ENCODE measurements at regions of chr13 and their contacts with region 1.

Region 1: GRCh38 chr13:28658796-28659620 is at the start of gene POMP:
- DNase-seq: peak; percentile 96
- H3K4me3 Mint-ChIP-seq: peak within 1 kb of the TSS; percentile 94
- H3K27ac Mint-ChIP-seq: peak within 1 kb of the TSS; percentile 98
- H3K4me1 Mint-ChIP-seq: peaks cover 51% of the 10 kb centered on the region
- H3K27me3 Mint-ChIP-seq: no peaks in the 10 kb centered on the region
- total RNA-seq, gene POMP: 123 to 125 TPM

Region 2: GRCh38 chr13:27620377-27621115 is 1038.5 kb before region 1 on chr13 and contains the start of gene LNX2:
- CTCF ChIA-PET with region 1: no interaction called
- POLR2A ChIA-PET with region 1: no interaction called
- intact Hi-C with region 1: loop called (anchors 10 kb)
- DNase-seq: peak; percentile 98
- H3K4me3 Mint-ChIP-seq: peak within 1 kb of the TSS; percentile 92
- H3K27ac Mint-ChIP-seq: peak within 1 kb of the TSS; percentile 88
- H3K4me1 Mint-ChIP-seq: peaks cover 54% of the 10 kb centered on the region
- H3K27me3 Mint-ChIP-seq: no peaks in the 10 kb centered on the region
- total RNA-seq, gene LNX2: 5.0 to 5.4 TPM

Region 3: DNA sequence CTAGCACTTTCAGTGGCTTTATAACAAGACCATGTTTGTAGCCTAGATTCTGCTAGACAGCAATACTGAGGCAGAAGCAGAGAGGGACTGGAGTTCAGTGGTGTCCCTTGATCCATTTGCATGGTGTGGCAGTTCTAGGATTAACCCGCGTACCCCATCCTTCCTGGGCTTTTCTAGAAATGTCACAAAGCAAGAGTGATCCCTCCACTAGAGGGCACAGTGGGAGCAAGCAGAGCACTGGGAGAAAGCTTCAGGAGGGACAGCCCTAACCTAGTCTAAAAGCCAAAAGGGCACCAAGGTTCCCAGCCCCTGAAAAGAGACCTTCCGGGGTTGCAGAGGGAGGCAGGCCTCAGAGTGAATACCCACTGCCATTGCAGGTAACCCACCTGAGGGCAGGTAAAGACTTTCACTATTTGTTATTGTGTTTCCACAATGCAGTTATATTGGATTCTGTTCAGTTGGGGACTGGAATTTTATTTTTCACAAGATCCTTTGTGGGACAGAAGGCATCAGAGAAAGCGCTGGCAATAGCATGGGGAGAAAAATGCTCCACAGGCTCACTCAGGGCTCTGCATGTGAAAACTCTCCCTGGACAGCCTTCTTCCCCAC is 334.7 kb before region 1 on chr13:
- CTCF ChIA-PET with region 1: interaction called, 9 read pairs
- POLR2A ChIA-PET with region 1: no interaction called
- intact Hi-C with region 1: loop called (anchors 2 kb)
- DNase-seq: peak; percentile 65
- H3K4me3 Mint-ChIP-seq: no peak overlapping the region
- H3K27ac Mint-ChIP-seq: no peak overlapping the region
- H3K4me1 Mint-ChIP-seq: peaks cover 3% of the 10 kb centered on the region
- H3K27me3 Mint-ChIP-seq: peaks cover 3% of the 10 kb centered on the region

Region 4: GRCh38 chr13:28636674-28637317 is 22.2 kb before region 1 on chr13:
- CTCF ChIA-PET with region 1: interaction called, 3 read pairs
- POLR2A ChIA-PET with region 1: interaction called, 3 read pairs
- intact Hi-C with region 1: loop called (anchors 1 kb)
- DNase-seq: peak; percentile 72
- H3K4me3 Mint-ChIP-seq: no peak overlapping the region
- H3K27ac Mint-ChIP-seq: no peak overlapping the region
- H3K4me1 Mint-ChIP-seq: peaks cover 6% of the 10 kb centered on the region
- H3K27me3 Mint-ChIP-seq: peaks cover 27% of the 10 kb centered on the region

Region 5: GRCh38 chr13:28718543-28719226 is 59.7 kb after region 1 on chr13 and contains the start of gene SLC46A3:
- CTCF ChIA-PET with region 1: no interaction called
- POLR2A ChIA-PET with region 1: interaction called, 4 read pairs
- intact Hi-C with region 1: loop called (anchors 1 kb)
- DNase-seq: peak; percentile 98
- H3K4me3 Mint-ChIP-seq: peak within 1 kb of the TSS; percentile 87
- H3K27ac Mint-ChIP-seq: peak within 1 kb of the TSS; percentile 76
- H3K4me1 Mint-ChIP-seq: peaks cover 30% of the 10 kb centered on the region
- H3K27me3 Mint-ChIP-seq: no peaks in the 10 kb centered on the region
- total RNA-seq, gene SLC46A3: 3.4 to 3.8 TPM